ENCODE measurements at regions of chr6 and their contacts with region 1.

Region 1: GRCh38 chr6:20117474-20117873 is 94.8 kb downstream of the MBOAT1 start:
- DNase-seq: no peak
- H3K4me3 ChIP-seq: no peak overlapping the region
- H3K27ac ChIP-seq: peak overlapping the region in 2 of 4 donors; percentile 83 to 88
- H3K4me1 ChIP-seq: peaks cover 0 to 67% (median 62%) of the 10 kb centered on the region in 4 donors
- H3K27me3 ChIP-seq: no peaks in the 10 kb centered on the region
- CTCF ChIP-seq: no peak
- EP300 ChIP-seq: no peak
- POLR2A ChIP-seq: no peak

Region 2: GRCh38 chr6:20061952-20062351 is 55.5 kb before region 1 on chr6:
- intact Hi-C with region 1: no loop called
- DNase-seq: no peak
- H3K4me3 ChIP-seq: no peak overlapping the region
- H3K27ac ChIP-seq: no peak overlapping the region
- H3K4me1 ChIP-seq: peaks cover 0 to 9% (median 3%) of the 10 kb centered on the region in 4 donors
- H3K27me3 ChIP-seq: no peaks in the 10 kb centered on the region
- CTCF ChIP-seq: no peak
- EP300 ChIP-seq: no peak
- POLR2A ChIP-seq: no peak

Region 3: GRCh38 chr6:20212392-20213217 is 95.1 kb after region 1 on chr6 and contains the start of gene MBOAT1:
- intact Hi-C with region 1: loop called (anchors 5 kb)
- DNase-seq: peak; percentile 96
- H3K4me3 ChIP-seq: peak within 1 kb of the TSS; percentile 76 to 91 (median 84)
- H3K27ac ChIP-seq: peak within 1 kb of the TSS; percentile 88 to 94 (median 90)
- H3K4me1 ChIP-seq: peaks cover 0 to 62% (median 44%) of the 10 kb centered on the region in 4 donors
- H3K27me3 ChIP-seq: no peaks in the 10 kb centered on the region
- CTCF ChIP-seq: no peak
- EP300 ChIP-seq: no peak
- POLR2A ChIP-seq: peak; percentile 38 to 65
- total RNA-seq, gene MBOAT1: 6.9 to 15.6 (median 11.0) TPM